Left colon (tissue), 2 donors: ENCODE measurements at regions of chr1 and their contacts with region 1.

Region 1: DNA sequence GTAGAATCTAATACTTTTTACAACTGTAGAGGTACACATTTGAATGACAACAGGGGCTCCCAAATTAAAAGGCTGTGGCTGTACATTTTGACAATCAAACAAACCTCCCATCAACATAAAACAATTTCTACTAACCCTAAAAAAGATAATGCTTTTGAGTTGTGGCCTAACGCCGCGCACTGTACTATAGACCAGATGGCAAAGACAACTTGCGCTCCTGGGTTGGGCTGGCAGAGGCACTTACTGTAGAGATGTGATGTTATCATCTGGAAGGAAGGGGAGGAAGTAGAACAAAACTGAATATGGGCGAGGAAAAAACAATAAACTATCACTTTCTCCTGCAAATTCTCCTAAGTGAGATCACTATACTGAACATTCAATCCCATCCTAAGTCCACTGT is 26.1 kb downstream of the SPRTN start:
- DNase-seq: no peak
- ATAC-seq: no peak

Region 2: DNA sequence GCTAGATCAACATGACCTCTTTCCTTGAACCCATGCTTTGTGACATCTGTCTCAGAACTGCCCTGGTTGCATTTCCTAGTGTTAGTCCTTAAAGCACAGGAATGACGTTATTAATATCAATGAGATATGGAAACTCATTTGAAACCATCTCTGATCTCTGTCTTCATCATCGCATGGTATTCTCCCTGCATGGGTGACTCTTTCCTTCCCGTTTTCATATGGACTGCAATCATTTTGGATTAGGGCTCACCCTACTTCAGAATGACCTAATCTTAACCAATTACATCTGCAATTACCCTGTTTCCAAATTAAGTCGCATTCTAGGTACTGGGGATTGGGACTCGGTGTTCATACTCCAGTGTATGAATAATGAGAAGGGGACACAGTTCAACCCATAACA is 220.7 kb after region 1 on chr1:
- intact Hi-C with region 1: loop called in 1 of 2 experiments (anchors 5 kb)
- DNase-seq: no peak
- ATAC-seq: no peak